ENCODE measurements at regions of chr6 and their contacts with region 1.

Region 1: GRCh38 chr6:71383901-71384489 is 95.4 kb downstream of the OGFRL1 start:
- DNase-seq: no peak
- H3K4me3 ChIP-seq: no peak overlapping the region
- H3K27ac ChIP-seq: no peak overlapping the region
- H3K4me1 ChIP-seq: peaks cover 31% of the 10 kb centered on the region
- H3K27me3 ChIP-seq: no peaks in the 10 kb centered on the region
- CTCF ChIP-seq: peak in 2 of 3 experiments; percentile 34 to 38

Region 2: DNA sequence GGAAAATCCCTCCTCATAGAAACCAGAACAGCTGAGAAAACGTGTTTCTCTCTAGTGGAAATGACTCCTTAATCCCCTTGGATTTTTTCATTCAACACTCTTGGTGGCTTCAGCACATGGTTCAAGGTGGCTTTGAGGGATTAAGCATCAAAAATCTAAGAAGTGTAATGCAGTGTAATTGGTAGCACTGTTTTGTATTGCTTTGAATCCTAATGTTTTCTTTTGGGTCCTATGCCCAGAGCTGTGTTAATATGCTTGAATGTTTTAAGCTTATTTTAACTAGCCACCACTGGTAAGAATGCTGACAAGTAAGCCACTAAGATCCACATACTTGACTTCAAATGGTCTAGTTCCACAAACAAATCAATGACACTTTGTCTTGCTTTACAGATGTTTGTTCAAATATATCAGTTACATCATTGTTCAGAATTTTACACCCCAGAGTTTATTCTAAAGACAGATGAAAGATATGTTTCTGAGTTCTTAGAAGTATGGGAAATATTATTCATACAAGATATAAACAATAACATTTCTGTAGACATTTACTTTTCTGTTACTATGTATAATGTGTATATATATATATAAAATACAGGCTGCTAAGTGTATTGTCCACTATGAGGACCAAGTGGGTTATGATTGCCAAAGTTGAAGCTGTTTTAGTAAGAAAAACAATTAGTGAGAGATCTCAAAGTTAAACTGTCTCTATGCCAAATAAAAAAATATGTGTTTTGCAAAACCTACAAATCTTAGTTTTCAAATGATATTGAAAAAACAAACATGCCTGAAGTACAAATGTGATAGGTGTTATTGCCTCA is 125.4 kb after region 1 on chr6:
- dilution Hi-C with region 1: loop called (anchors 10 kb)
- DNase-seq: no peak
- H3K4me3 ChIP-seq: no peak overlapping the region
- H3K27ac ChIP-seq: no peak overlapping the region
- H3K4me1 ChIP-seq: no peaks in the 10 kb centered on the region
- H3K27me3 ChIP-seq: no peaks in the 10 kb centered on the region
- CTCF ChIP-seq: no peak